ENCODE measurements at regions of chr14 and their contacts with region 1.

Region 1: GRCh38 chr14:87992718-87993628 is at the start of gene GALC:
- DNase-seq: peak; percentile 92 to 97 (median 95)
- ATAC-seq: peak; percentile 88 to 90 (median 89)
- H3K4me3 ChIP-seq: peak within 1 kb of the TSS; percentile 66 to 86
- H3K4me3 Mint-ChIP-seq: peak within 1 kb of the TSS; percentile 86 to 93 (median 88)
- H3K27ac ChIP-seq: peak within 1 kb of the TSS; percentile 98
- H3K27ac Mint-ChIP-seq: peak within 1 kb of the TSS; percentile 98 to 99
- H3K4me1 ChIP-seq: peaks cover 7 to 31% of the 10 kb centered on the region in 2 experiments
- H3K4me1 Mint-ChIP-seq: peaks cover 75 to 78% (median 75%) of the 10 kb centered on the region in 3 donors
- H3K27me3 ChIP-seq: no peaks in the 10 kb centered on the region
- H3K27me3 Mint-ChIP-seq: no peaks in the 10 kb centered on the region
- total RNA-seq, gene GALC: 17.2 to 20.5 (median 18.6) TPM

Region 2: DNA sequence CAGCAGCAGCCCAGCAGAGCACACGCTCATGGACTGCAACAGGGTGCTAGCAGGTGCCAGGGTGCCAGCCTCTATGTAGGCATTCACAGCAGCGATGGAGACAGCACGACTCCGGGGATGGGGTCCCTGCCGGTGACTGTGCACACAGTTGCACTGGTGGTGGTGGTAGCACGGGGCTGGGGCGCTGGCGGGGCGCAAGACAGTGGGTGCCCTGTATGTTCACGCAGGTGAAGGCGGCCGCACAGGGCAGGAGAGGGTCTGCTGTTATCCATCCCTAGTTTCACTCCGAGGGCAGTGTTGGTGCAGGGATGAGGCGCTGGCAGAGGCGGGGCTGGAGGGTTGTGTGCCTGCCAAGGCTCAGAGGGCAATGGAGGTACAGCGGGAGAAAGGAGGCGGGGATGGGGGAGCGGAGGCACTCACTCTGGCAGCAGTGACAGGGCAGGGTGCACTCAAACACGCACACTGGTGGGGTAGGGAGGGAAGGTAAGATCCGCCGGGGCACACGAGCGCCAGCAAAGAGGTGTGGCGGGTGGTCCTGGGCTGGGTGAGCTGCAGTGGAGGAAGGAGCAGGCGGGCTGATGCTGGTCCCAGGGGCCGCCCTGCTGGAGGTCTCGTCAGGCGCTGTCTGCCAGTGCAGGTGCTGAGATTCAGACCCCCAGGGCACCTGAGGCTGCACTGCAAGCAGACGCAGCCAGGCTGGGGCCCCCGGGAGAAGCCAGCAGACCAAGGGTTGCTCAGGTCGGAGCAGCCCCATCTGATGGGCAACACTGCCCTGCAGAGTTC is 76.7 kb before region 1 on chr14:
- CTCF ChIA-PET with region 1: no interaction called
- POLR2A ChIA-PET with region 1: no interaction called
- DNase-seq: no peak
- ATAC-seq: no peak
- H3K4me3 ChIP-seq: no peak overlapping the region
- H3K4me3 Mint-ChIP-seq: no peak overlapping the region
- H3K27ac ChIP-seq: no peak overlapping the region
- H3K27ac Mint-ChIP-seq: no peak overlapping the region
- H3K4me1 ChIP-seq: no peaks in the 10 kb centered on the region
- H3K4me1 Mint-ChIP-seq: no peaks in the 10 kb centered on the region
- H3K27me3 ChIP-seq: peaks cover 0 to 16% of the 10 kb centered on the region in 2 experiments
- H3K27me3 Mint-ChIP-seq: peaks cover 11 to 12% of the 10 kb centered on the region in 2 donors

Region 3: GRCh38 chr14:88005978-88006851 is 13.2 kb after region 1 on chr14:
- CTCF ChIA-PET with region 1: interaction called, 4 to 15 read pairs
- POLR2A ChIA-PET with region 1: interaction called, 4 to 59 read pairs
- DNase-seq: peak in 34 of 35 experiments; percentile 31 to 90 (median 70)
- ATAC-seq: peak; percentile 90 to 96 (median 96)
- H3K4me3 ChIP-seq: peak overlapping the region; percentile 74 to 84
- H3K4me3 Mint-ChIP-seq: peak overlapping the region; percentile 80 to 87 (median 83)
- H3K27ac ChIP-seq: peak overlapping the region; percentile 96
- H3K27ac Mint-ChIP-seq: peak overlapping the region; percentile 96 to 97
- H3K4me1 ChIP-seq: peaks cover 28 to 69% of the 10 kb centered on the region in 2 experiments
- H3K4me1 Mint-ChIP-seq: peaks cover 69 to 72% (median 71%) of the 10 kb centered on the region in 3 donors
- H3K27me3 ChIP-seq: no peaks in the 10 kb centered on the region
- H3K27me3 Mint-ChIP-seq: no peaks in the 10 kb centered on the region

Region 4: DNA sequence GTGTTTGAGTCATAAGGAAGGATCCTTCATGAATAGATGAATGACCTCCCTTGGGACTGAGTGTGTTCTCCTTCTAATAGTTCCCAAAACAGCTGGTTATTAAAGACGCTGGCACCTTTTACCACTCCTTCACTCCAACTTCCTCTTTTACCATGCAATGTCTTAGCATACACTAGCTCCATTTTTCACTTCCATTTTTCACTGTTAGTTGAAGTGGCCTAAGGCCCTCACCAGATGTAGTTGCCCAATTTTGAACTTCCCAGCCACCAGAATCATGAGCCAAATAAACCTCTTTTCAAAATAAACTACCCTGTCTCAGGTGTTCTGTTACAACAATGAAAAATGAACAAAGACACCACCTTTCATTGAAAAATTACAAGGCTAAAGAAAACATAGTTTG is 76.7 kb after region 1 on chr14:
- CTCF ChIA-PET with region 1: no interaction called
- POLR2A ChIA-PET with region 1: no interaction called
- DNase-seq: no peak
- ATAC-seq: no peak
- H3K4me3 ChIP-seq: no peak overlapping the region
- H3K4me3 Mint-ChIP-seq: no peak overlapping the region
- H3K27ac ChIP-seq: no peak overlapping the region
- H3K27ac Mint-ChIP-seq: no peak overlapping the region
- H3K4me1 ChIP-seq: no peaks in the 10 kb centered on the region
- H3K4me1 Mint-ChIP-seq: no peaks in the 10 kb centered on the region
- H3K27me3 ChIP-seq: no peaks in the 10 kb centered on the region
- H3K27me3 Mint-ChIP-seq: peaks cover 0 to 7% of the 10 kb centered on the region in 2 donors